GM12878 (cell line): ENCODE measurements at regions of chr11 and their contacts with region 1.

Region 1: DNA sequence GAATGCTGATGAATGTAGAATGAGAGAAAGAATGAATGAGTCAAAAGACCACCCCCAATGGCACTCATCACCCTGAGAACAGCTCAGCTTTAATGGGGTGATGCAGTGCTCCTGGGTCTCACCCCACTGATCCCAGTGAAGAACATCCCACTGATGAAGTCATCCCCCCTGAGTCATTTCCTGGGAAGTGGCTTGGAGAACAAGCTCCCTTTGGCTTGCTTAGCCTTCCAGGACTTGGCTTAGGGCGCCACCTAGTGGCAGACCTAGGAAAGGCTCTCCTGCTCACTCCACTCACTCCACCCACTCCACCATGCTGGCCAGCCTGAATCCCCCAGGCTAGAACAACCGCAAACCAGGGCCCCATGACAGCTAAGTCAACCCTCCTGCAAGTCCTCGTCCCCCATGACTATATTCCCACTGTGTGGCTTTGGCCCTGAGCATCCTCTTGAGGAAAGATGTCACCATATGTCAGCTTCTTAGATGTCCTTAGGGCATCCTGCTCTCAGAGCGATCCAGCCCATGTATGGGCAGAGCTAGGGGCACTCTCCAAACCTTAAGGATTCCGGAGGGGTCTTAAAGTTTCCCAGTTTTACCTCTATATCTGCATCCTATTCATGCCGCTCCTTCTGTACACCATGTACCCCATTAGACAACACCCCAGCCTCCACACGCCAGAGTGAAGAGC is 17.8 kb upstream of the TMPRSS13 start:
- DNase-seq: no peak
- ATAC-seq: peak; percentile 76
- H3K4me3 ChIP-seq: no peak overlapping the region
- H3K27ac ChIP-seq: no peak overlapping the region
- H3K4me1 ChIP-seq: peaks cover 39% of the 10 kb centered on the region
- H3K27me3 ChIP-seq: no peaks in the 10 kb centered on the region
- CTCF ChIP-seq: peak; percentile 95 to 96 (median 95)
- EP300 ChIP-seq: no peak
- POLR2A ChIP-seq: no peak
- RAD21 ChIP-seq: peak; percentile 94

Region 2: GRCh38 chr11:117817368-117818040 is 129.5 kb before region 1 on chr11:
- CTCF ChIA-PET with region 1: interaction called, 503 read pairs
- POLR2A ChIA-PET with region 1: interaction called, 10 read pairs
- RAD21 ChIA-PET with region 1: interaction called, 393 read pairs
- SMC1A ChIA-PET with region 1: interaction called, 183 read pairs
- in situ Hi-C with region 1: no loop called
- intact Hi-C with region 1: loop called (anchors 1 kb)
- DNase-seq: peak; percentile 93
- ATAC-seq: peak; percentile 47
- H3K4me3 ChIP-seq: no peak overlapping the region
- H3K27ac ChIP-seq: peak overlapping the region; percentile 87
- H3K4me1 ChIP-seq: peaks cover 55% of the 10 kb centered on the region
- H3K27me3 ChIP-seq: no peaks in the 10 kb centered on the region
- CTCF ChIP-seq: peak; percentile 98 to 100 (median 99)
- EP300 ChIP-seq: no peak; a peak in 1 of 4 replicates
- POLR2A ChIP-seq: peak; percentile 4; the same call in 1 of the 2 replicates
- RAD21 ChIP-seq: peak; percentile 95

Region 3: DNA sequence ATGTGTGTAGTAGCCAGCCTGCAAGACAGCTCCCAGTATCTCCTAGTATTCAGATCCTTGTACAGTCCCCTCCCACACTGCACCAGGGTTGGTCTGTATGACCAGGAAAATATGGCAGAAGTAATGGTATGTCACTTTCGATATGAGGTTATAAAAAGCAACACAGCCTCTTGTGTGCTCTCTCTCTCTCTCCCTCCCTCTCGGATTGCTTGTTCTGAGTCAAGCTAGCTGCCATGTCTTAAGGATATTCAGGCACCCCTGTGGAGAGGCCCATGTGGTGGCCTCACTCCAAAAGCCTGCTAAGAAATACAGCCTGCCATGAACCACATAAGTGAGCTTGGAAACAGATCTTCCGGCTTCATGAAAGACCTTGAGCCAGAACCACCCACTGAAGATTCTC is 95.9 kb before region 1 on chr11:
- CTCF ChIA-PET with region 1: interaction called, 238 read pairs
- POLR2A ChIA-PET with region 1: interaction called, 3 read pairs
- RAD21 ChIA-PET with region 1: interaction called, 135 read pairs
- SMC1A ChIA-PET with region 1: interaction called, 163 read pairs
- in situ Hi-C with region 1: no loop called
- intact Hi-C with region 1: no loop called
- DNase-seq: no peak
- ATAC-seq: peak; percentile 14; the same call in 2 of the 3 replicates
- H3K4me3 ChIP-seq: no peak overlapping the region
- H3K27ac ChIP-seq: no peak overlapping the region
- H3K4me1 ChIP-seq: no peaks in the 10 kb centered on the region
- H3K27me3 ChIP-seq: no peaks in the 10 kb centered on the region; a peak in 2 of 4 replicates
- CTCF ChIP-seq: no peak
- EP300 ChIP-seq: no peak
- POLR2A ChIP-seq: no peak
- RAD21 ChIP-seq: no peak

Region 4: DNA sequence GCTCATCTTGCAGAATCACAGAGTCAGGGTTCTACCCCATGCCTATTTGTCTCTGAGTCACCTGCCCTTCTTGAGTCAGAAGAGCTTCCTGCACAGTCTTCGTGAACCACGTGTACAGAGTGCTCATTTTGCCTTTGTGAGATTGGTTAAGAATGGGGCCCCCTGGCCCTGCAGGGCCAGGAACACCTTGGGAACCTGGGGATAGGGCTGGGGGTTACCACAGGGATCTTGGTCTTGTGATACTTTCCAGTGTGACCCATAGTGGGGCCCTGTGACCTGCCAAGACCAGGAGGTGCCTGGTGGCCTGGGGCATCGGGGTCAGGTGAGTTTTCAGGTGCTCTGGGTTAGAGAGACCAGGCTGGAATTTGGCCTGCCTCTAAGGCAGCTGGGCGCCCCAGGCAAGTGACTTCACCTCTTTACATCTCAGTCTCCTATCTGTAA is 27.2 kb before region 1 on chr11:
- CTCF ChIA-PET with region 1: interaction called, 43 read pairs
- POLR2A ChIA-PET with region 1: interaction called, 7 read pairs
- RAD21 ChIA-PET with region 1: interaction called, 10 read pairs
- SMC1A ChIA-PET with region 1: interaction called, 9 read pairs
- in situ Hi-C with region 1: no loop called
- intact Hi-C with region 1: no loop called
- DNase-seq: no peak
- ATAC-seq: peak; percentile 83
- H3K4me3 ChIP-seq: no peak overlapping the region
- H3K27ac ChIP-seq: no peak overlapping the region
- H3K4me1 ChIP-seq: peaks cover 8% of the 10 kb centered on the region
- H3K27me3 ChIP-seq: no peaks in the 10 kb centered on the region
- CTCF ChIP-seq: no peak
- EP300 ChIP-seq: no peak
- POLR2A ChIP-seq: no peak
- RAD21 ChIP-seq: no peak

Region 5: GRCh38 chr11:117979481-117980211 is 32.7 kb after region 1 on chr11:
- CTCF ChIA-PET with region 1: interaction called, 15 read pairs
- POLR2A ChIA-PET with region 1: interaction called, 5 read pairs
- RAD21 ChIA-PET with region 1: interaction called, 55 read pairs
- SMC1A ChIA-PET with region 1: interaction called, 167 read pairs
- in situ Hi-C with region 1: no loop called
- intact Hi-C with region 1: no loop called
- DNase-seq: peak; percentile 82
- ATAC-seq: peak; percentile 91
- H3K4me3 ChIP-seq: no peak overlapping the region
- H3K27ac ChIP-seq: 0 out of 2 replicates have a peak overlapping the region, but pooled peaks have one; percentile 20
- H3K4me1 ChIP-seq: peaks cover 18% of the 10 kb centered on the region
- H3K27me3 ChIP-seq: no peaks in the 10 kb centered on the region
- CTCF ChIP-seq: no peak
- EP300 ChIP-seq: no peak
- POLR2A ChIP-seq: no peak
- RAD21 ChIP-seq: no peak

Region 6: DNA sequence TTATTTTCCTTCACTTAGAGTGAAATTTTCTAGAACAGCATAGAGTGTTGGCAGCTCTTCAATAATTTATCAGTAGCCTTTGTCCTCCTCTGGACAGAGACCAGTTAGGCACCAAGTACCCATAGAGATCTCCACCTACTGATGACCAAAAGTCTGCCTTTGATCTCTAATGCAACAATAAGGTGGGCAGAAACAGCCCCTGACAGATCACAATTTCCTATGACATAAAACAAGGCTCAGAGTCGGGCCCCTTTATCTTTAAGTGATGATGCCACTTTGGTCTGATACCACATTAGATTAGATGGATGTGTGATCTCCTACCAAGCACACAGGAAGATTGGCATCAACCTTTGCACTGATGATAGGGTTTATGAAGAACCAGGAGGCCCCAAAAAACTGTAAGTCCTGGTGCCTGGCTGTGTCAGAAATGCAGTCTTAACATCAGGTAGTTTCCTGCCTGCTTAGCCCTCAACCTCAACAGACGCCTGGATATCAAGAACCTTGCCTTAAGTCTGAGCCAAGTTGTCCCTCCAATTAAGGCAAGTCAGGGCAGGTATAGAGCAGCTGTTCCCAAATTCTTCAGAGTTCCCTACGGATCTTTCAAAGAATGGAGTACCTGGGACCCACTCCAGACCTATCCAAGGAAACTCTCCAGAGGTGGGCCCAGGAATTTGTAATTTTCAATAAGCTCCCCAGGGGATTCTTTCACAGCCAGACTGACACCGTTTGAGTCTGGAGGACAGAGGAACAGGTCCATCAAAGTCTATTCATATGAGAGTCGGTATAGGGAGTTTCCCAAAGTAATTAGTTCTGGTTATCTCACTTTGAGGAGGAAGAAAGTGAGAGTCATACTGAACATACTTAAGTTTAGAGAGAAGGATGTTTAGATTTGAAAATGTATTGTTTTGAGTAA is 99.3 kb after region 1 on chr11:
- CTCF ChIA-PET with region 1: interaction called, 364 read pairs
- POLR2A ChIA-PET with region 1: interaction called, 4 read pairs
- RAD21 ChIA-PET with region 1: interaction called, 248 read pairs
- SMC1A ChIA-PET with region 1: interaction called, 295 read pairs
- in situ Hi-C with region 1: loop called (anchors 5 kb)
- intact Hi-C with region 1: no loop called
- DNase-seq: peak; percentile 44
- ATAC-seq: peak; percentile 88
- H3K4me3 ChIP-seq: no peak overlapping the region
- H3K27ac ChIP-seq: no peak overlapping the region
- H3K4me1 ChIP-seq: peaks cover 20% of the 10 kb centered on the region
- H3K27me3 ChIP-seq: no peaks in the 10 kb centered on the region
- CTCF ChIP-seq: no peak
- EP300 ChIP-seq: no peak
- POLR2A ChIP-seq: no peak
- RAD21 ChIP-seq: no peak